Mammary epithelial cell (primary cell): ENCODE measurements at regions of chr20 and their contacts with region 1.

Region 1: DNA sequence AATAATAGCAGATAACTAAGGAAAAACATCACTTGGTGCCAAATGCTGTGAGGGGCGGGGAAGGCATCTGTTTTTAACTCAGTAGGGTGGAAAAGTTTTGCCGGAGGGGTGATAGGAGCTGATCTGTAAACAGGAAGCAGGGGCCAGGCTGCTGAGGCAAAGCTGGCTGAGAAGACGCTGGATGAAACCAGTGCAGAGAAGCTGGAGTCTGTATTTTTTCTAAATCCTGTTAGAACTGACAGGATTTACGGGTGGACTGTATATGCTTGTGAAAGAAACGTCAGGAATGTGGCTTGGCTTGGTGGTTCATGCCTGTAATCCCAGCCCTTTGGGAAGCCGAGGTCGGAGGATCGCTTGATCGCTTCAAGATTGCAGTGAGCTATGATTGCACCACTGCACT is 5.6 kb downstream of the PCMTD2 start:
- DNase-seq: no peak
- H3K4me3 ChIP-seq: no peak overlapping the region
- H3K27ac ChIP-seq: no peak overlapping the region
- H3K4me1 ChIP-seq: peaks cover 7% of the 10 kb centered on the region
- H3K27me3 ChIP-seq: no peaks in the 10 kb centered on the region
- CTCF ChIP-seq: no peak

Region 2: DNA sequence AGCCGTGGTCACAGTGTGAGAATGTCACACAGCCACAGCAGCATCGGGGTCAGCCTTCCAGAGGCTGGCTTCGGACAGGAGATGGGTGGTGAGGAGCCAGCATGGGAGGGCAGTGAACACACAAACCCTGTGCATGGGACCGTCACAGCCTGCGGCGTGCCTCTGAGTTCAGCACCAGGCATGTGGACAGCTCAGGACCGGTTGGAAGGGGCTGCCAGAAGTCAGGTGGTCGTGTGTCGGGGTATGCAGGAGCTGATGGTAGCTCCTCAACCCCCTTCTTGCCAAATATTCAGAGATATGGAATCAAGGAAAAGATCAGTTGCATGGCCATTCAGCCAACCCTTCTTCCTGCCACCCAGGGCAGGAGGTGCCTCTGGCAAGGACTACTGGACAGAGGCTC is 68.7 kb before region 1 on chr20:
- CTCF ChIA-PET with region 1: no interaction called
- dilution Hi-C with region 1: no loop called
- in situ Hi-C with region 1: no loop called
- intact Hi-C with region 1: no loop called
- DNase-seq: no peak
- H3K4me3 ChIP-seq: no peak overlapping the region
- H3K27ac ChIP-seq: no peak overlapping the region
- H3K4me1 ChIP-seq: peaks cover 2% of the 10 kb centered on the region
- H3K27me3 ChIP-seq: no peaks in the 10 kb centered on the region
- CTCF ChIP-seq: no peak

Region 3: DNA sequence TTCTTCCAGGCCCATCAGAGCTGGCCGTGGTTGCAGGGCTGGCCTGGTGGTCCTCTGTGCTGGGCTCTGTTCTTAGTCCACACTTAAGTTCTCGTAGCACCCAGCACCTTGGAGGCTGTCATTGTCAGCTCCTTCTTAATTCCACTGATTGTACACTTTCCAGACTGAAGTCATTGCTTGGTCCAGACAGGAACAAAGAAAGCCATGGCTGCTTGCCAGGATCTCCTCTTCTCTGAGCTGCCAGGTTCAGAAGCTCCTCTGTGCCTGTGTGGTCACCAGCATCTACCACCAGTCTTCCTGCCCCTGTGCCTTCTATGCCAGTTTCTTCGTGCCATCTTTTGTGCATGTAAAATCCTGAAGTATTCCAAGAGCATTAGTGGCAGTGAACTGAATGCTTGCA is 45.1 kb before region 1 on chr20:
- CTCF ChIA-PET with region 1: no interaction called
- dilution Hi-C with region 1: loop called (anchors 5 kb)
- in situ Hi-C with region 1: no loop called
- intact Hi-C with region 1: no loop called
- DNase-seq: no peak
- H3K4me3 ChIP-seq: no peak overlapping the region
- H3K27ac ChIP-seq: no peak overlapping the region
- H3K4me1 ChIP-seq: no peaks in the 10 kb centered on the region
- H3K27me3 ChIP-seq: no peaks in the 10 kb centered on the region
- CTCF ChIP-seq: no peak